CD4-positive, alpha-beta T cell (primary cell): ENCODE measurements at regions of chr11 and their contacts with region 1.

Region 1: DNA sequence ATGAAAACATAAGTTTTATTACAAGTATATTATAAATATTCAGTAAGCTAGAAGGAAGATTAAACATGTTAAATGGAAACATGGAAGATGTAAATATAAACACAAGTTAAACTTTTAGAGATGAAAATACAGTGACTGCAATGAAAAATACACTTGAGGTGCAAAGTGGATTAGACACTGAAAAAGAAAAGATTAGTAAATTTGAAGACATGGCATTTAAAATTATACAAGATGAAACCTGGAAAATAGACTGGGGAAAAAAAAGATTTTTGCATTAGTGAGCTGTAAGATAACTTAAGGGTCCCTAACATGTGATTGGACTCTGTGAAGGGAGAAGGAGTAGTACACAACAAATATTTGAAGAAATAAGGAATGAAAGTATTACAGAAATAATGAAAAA is 33.3 kb downstream of the ELP4 start:
- DNase-seq: no peak
- ATAC-seq: no peak
- H3K4me3 ChIP-seq: no peak overlapping the region
- H3K4me3 Mint-ChIP-seq: no peak overlapping the region
- H3K27ac ChIP-seq: no peak overlapping the region
- H3K27ac Mint-ChIP-seq: no peak overlapping the region
- H3K4me1 ChIP-seq: no peaks in the 10 kb centered on the region
- H3K4me1 Mint-ChIP-seq: no peaks in the 10 kb centered on the region
- H3K27me3 ChIP-seq: no peaks in the 10 kb centered on the region
- H3K27me3 Mint-ChIP-seq: no peaks in the 10 kb centered on the region
- CTCF ChIP-seq: no peak

Region 2: GRCh38 chr11:31492320-31492913 is 50.4 kb before region 1 on chr11:
- CTCF ChIA-PET with region 1: no interaction called
- POLR2A ChIA-PET with region 1: no interaction called
- intact Hi-C with region 1: no loop called
- DNase-seq: no peak
- ATAC-seq: no peak
- H3K4me3 ChIP-seq: no peak overlapping the region
- H3K4me3 Mint-ChIP-seq: no peak overlapping the region
- H3K27ac ChIP-seq: no peak overlapping the region
- H3K27ac Mint-ChIP-seq: no peak overlapping the region
- H3K4me1 ChIP-seq: no peaks in the 10 kb centered on the region
- H3K4me1 Mint-ChIP-seq: peaks cover 30% of the 10 kb centered on the region
- H3K27me3 ChIP-seq: no peaks in the 10 kb centered on the region
- H3K27me3 Mint-ChIP-seq: no peaks in the 10 kb centered on the region
- CTCF ChIP-seq: no peak

Region 3: GRCh38 chr11:31558001-31558400 is 15.1 kb after region 1 on chr11:
- CTCF ChIA-PET with region 1: no interaction called
- POLR2A ChIA-PET with region 1: no interaction called
- intact Hi-C with region 1: loop called in 1 of 2 experiments (anchors 2 kb)
- DNase-seq: no peak
- ATAC-seq: no peak
- H3K4me3 ChIP-seq: no peak overlapping the region
- H3K4me3 Mint-ChIP-seq: no peak overlapping the region
- H3K27ac ChIP-seq: no peak overlapping the region
- H3K27ac Mint-ChIP-seq: no peak overlapping the region
- H3K4me1 ChIP-seq: no peaks in the 10 kb centered on the region
- H3K4me1 Mint-ChIP-seq: no peaks in the 10 kb centered on the region
- H3K27me3 ChIP-seq: no peaks in the 10 kb centered on the region
- H3K27me3 Mint-ChIP-seq: no peaks in the 10 kb centered on the region
- CTCF ChIP-seq: no peak